ENCODE measurements at regions of chr9 and their contacts with region 1.

Region 1: GRCh38 chr9:129131300-129132145 is 20.3 kb downstream of the PTPA start:
- DNase-seq: peak; percentile 89
- ATAC-seq: peak; percentile 97
- H3K4me3 Mint-ChIP-seq: no peak overlapping the region
- H3K27ac Mint-ChIP-seq: no peak overlapping the region
- H3K4me1 Mint-ChIP-seq: peaks cover 9% of the 10 kb centered on the region
- H3K27me3 Mint-ChIP-seq: no peaks in the 10 kb centered on the region

Region 2: GRCh38 chr9:129110740-129111527 is 20.6 kb before region 1 on chr9 and contains the starts of genes CRAT and PTPA:
- CTCF ChIA-PET with region 1: interaction called, 31 read pairs
- DNase-seq: peak; percentile 98
- ATAC-seq: peak; percentile 93
- H3K4me3 Mint-ChIP-seq: peak within 1 kb of the TSS; percentile 94
- H3K27ac Mint-ChIP-seq: peak within 1 kb of the TSS; percentile 98
- H3K4me1 Mint-ChIP-seq: peaks cover 35% of the 10 kb centered on the region
- H3K27me3 Mint-ChIP-seq: no peaks in the 10 kb centered on the region
- total RNA-seq, gene CRAT: 14.1 to 17.6 TPM
- total RNA-seq, gene PTPA: 115 to 129 TPM

Region 3: GRCh38 chr9:129121483-129121882 is 10.0 kb before region 1 on chr9:
- CTCF ChIA-PET with region 1: interaction called, 254 read pairs
- DNase-seq: no peak
- ATAC-seq: no peak
- H3K4me3 Mint-ChIP-seq: no peak overlapping the region
- H3K27ac Mint-ChIP-seq: no peak overlapping the region
- H3K4me1 Mint-ChIP-seq: no peaks in the 10 kb centered on the region
- H3K27me3 Mint-ChIP-seq: no peaks in the 10 kb centered on the region

Region 4: DNA sequence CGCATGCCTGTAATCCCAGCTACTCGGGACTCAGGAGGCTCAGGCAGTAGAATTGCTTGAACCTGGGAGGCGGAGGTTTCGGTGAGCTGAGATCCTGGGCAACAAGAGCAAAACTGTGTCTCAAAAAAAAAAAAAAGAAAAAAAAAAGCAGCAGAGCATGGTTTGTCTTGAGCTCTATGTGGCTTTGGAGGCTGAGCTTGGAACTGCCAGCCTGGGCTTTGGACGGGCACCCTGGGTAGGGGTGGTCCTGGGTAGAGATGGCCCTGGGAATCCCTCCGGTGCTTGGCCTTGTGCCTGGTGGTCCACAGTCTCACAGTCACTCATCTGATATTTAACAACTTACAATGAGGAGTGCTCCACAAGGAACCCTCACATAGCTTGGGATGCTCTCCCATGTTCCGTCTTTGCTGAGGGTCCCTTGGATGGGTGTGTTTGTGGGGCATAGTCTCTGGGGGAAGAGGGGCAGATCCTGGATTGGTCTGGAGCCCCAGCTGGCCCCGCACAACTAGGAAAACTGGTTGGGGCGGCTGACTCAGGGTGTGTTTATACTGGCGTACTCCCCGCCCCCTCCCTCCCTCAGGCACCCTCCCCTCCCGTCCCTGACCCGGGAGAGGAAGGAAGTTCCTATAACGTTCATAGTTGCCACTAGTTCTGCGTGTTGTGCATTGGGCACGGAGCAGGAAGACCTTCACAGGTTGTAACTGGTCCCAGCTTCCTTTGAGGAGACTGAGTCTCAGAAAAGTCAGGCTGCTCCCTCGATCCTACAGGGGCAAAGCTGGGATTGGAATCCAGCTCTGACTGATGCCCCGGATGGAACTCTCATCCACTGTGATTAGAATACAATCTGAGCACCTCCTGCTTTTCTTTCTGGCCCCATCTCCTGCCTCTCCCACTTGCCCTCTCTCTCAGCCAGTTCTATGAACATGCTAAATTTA is 35.4 kb after region 1 on chr9:
- CTCF ChIA-PET with region 1: interaction called, 33 read pairs
- DNase-seq: no peak
- ATAC-seq: peak; percentile 39
- H3K4me3 Mint-ChIP-seq: no peak overlapping the region
- H3K27ac Mint-ChIP-seq: no peak overlapping the region
- H3K4me1 Mint-ChIP-seq: peaks cover 28% of the 10 kb centered on the region
- H3K27me3 Mint-ChIP-seq: peaks cover 4% of the 10 kb centered on the region

Measured in activated CD8-positive, alpha-beta memory T cell treated with anti-CD3 and anti-CD28 coated beads, Interleukin-2, amount 10 ng/mL, durations not matched to agents 7 days and 5 days (primary cell).